ENCODE measurements at regions of chr12 and their contacts with region 1.

Region 1: GRCh38 chr12:24861766-24862575 is 86.9 kb downstream of the BCAT1 start:
- DNase-seq: peak; percentile 88 to 89
- H3K4me3 ChIP-seq: no peak overlapping the region
- H3K4me3 Mint-ChIP-seq: peak overlapping the region; percentile 57
- H3K27ac Mint-ChIP-seq: peak overlapping the region; percentile 94
- H3K4me1 ChIP-seq: peaks cover 67% of the 10 kb centered on the region
- H3K4me1 Mint-ChIP-seq: peaks cover 39% of the 10 kb centered on the region
- H3K27me3 ChIP-seq: no peaks in the 10 kb centered on the region
- H3K27me3 Mint-ChIP-seq: no peaks in the 10 kb centered on the region
- CTCF ChIP-seq: no peak

Region 2: DNA sequence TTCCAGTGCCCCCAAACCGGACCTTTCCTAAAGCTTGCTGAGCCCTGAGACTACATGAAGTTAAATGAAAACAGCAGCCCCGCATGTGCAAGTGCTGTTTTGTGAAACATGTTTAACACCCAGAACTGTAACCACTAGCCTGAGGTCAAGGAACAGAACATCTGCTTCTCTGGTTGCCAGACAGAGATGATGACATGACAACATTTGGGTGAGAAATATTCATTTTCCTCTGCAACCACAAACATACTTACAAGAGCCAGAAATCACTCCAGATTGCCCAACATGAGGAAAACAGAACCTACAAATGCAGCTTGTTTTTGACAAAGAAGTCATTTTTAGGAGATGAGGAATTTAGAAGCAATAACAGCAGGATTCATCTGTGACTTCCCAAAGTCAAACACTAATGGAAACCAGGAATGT is 23.4 kb before region 1 on chr12:
- CTCF ChIA-PET with region 1: interaction called, 7 read pairs
- POLR2A ChIA-PET with region 1: interaction called, 10 read pairs
- intact Hi-C with region 1: loop called (anchors 2 kb)
- DNase-seq: no peak
- H3K4me3 ChIP-seq: no peak overlapping the region
- H3K4me3 Mint-ChIP-seq: no peak overlapping the region
- H3K27ac Mint-ChIP-seq: no peak overlapping the region
- H3K4me1 ChIP-seq: no peaks in the 10 kb centered on the region
- H3K4me1 Mint-ChIP-seq: peaks cover 7% of the 10 kb centered on the region
- H3K27me3 ChIP-seq: no peaks in the 10 kb centered on the region
- H3K27me3 Mint-ChIP-seq: no peaks in the 10 kb centered on the region
- CTCF ChIP-seq: no peak

Region 3: GRCh38 chr12:24947541-24948419 is 85.8 kb after region 1 on chr12:
- CTCF ChIA-PET with region 1: no interaction called
- POLR2A ChIA-PET with region 1: no interaction called
- intact Hi-C with region 1: loop called (anchors 2 kb)
- DNase-seq: no peak
- H3K4me3 ChIP-seq: peak overlapping the region; percentile 59
- H3K4me3 Mint-ChIP-seq: peak overlapping the region; percentile 81
- H3K27ac Mint-ChIP-seq: peak overlapping the region; percentile 99
- H3K4me1 ChIP-seq: peaks cover 27% of the 10 kb centered on the region
- H3K4me1 Mint-ChIP-seq: peaks cover 28% of the 10 kb centered on the region
- H3K27me3 ChIP-seq: no peaks in the 10 kb centered on the region
- H3K27me3 Mint-ChIP-seq: no peaks in the 10 kb centered on the region
- CTCF ChIP-seq: no peak

Measured in Caco-2 (cell line).